Ascending aorta (tissue), 2 donors: ENCODE measurements at regions of chr20 and their contacts with region 1.

Region 1: GRCh38 chr20:20052074-20052970 is at the starts of genes CFAP61 and CRNKL1:
- DNase-seq: peak; percentile 79 to 97
- H3K4me3 ChIP-seq: peak within 1 kb of the TSS; percentile 88 to 93
- H3K27ac ChIP-seq: peak within 1 kb of the TSS; percentile 85 to 86
- H3K4me1 ChIP-seq: peaks cover 3 to 5% of the 10 kb centered on the region in 2 donors
- H3K27me3 ChIP-seq: no peaks in the 10 kb centered on the region
- CTCF ChIP-seq: peak in 2 of 3 experiments; percentile 7 to 18
- total RNA-seq, gene CFAP61: not detected
- total RNA-seq, gene CRNKL1: 2.2 TPM

Region 2: DNA sequence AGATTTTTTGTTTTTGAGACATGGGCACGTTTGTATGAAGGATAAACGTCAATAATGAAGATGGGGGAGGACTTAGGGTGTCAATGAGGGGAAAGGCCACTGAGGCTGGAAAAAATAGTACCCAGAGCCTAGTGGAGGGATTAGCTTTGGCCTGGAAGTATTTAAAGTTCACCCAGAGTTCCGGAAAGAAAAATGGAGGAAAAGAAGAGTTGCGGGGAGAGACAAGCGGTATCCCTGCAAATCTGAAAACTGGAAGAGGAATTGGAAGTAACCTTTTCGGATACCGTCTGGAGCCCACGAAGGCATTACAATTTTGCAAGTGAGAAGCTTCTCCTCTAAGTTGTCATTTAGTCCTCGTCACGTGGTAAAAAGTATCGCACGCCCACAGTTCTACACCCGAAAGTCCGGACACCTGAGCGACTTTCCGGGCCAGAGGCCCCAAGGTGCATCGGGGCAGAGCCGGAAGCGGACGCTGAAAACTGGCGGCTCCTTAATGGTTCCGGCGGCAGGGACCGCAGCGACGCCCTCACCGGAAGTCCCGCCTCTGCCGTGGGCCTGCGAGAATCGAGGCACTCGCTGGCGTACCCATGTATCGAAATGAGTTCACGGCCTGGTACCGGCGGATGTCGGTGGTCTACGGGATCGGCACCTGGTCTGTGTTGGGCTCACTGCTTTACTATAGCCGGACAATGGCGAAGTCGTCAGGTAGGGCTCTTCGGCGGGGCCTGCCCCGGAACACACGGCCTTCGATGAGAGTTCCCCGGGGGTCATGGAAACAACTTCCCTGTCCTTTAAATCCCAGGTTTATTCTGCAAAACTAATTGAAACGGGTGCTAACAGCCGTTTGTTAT is 1485.2 kb before region 1 on chr20 and contains the start of gene SMIM26:
- intact Hi-C with region 1: loop called (anchors 2 kb)
- DNase-seq: peak; percentile 43 to 96
- H3K4me3 ChIP-seq: peak within 1 kb of the TSS; percentile 73 to 86
- H3K27ac ChIP-seq: peak within 1 kb of the TSS; percentile 80 to 93
- H3K4me1 ChIP-seq: peaks cover 0 to 10% of the 10 kb centered on the region in 2 donors
- H3K27me3 ChIP-seq: no peaks in the 10 kb centered on the region
- CTCF ChIP-seq: no peak
- total RNA-seq, gene SMIM26: 67.7 TPM

Region 3: GRCh38 chr20:18793625-18794427 is 1258.5 kb before region 1 on chr20:
- intact Hi-C with region 1: loop called (anchors 10 kb)
- DNase-seq: peak; percentile 71 to 94
- H3K4me3 ChIP-seq: peak overlapping the region; percentile 63 to 79
- H3K27ac ChIP-seq: peak overlapping the region; percentile 78 to 80
- H3K4me1 ChIP-seq: peaks cover 0 to 3% of the 10 kb centered on the region in 2 donors
- H3K27me3 ChIP-seq: no peaks in the 10 kb centered on the region
- CTCF ChIP-seq: peak in 1 of 3 experiments; percentile 17

Region 4: DNA sequence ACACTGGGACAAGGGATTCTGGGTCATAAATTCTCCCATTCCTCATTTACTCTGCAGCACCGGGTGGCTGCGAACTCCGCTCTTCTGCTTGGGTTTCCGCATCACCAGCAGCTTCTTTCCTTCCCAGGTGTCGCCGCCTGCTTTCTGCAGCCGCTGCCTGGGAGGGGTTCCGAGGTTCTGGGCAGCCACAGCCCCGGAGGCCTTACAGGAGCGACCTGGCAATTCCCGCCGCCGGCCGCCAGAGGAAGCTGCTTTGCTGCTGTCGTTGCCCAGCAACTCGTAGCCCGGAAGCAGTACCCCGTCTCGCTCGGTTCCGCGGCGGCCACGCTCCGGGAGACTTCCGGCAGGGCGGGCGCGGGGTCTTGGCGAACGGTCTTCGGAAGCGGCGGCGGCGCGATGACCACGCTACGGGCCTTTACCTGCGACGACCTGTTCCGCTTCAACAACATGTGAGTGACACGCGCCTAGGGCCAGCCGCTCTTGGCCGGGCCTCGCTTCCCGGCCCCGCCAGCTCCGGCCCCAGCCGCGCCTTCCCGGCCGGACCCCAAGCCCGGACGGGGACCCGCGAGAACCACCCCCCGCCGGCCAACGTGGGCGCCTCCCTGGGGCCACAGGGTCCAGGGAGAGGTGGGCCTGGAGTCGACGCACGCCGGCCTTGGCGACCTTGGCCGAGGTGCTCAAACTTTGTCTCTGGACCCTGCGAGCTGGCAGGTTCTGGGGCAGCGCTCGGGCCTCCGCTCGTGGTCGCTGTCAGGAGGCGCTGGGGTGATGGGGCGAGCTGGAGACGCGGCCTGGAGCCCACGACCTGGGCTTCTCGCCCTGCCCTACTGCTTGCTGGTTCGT is 35.1 kb before region 1 on chr20 and contains the start of gene NAA20:
- intact Hi-C with region 1: loop called (anchors 1 kb)
- DNase-seq: peak; percentile 58 to 95
- H3K4me3 ChIP-seq: peak within 1 kb of the TSS; percentile 95 to 100
- H3K27ac ChIP-seq: peak within 1 kb of the TSS; percentile 71 to 74
- H3K4me1 ChIP-seq: peaks cover 17 to 19% of the 10 kb centered on the region in 2 donors
- H3K27me3 ChIP-seq: no peaks in the 10 kb centered on the region
- CTCF ChIP-seq: peak; percentile 78 to 92 (median 85)
- total RNA-seq, gene NAA20: 2.7 TPM

Region 5: GRCh38 chr20:20568604-20569205 is 516.4 kb after region 1 on chr20:
- intact Hi-C with region 1: loop called (anchors 10 kb)
- DNase-seq: no peak
- H3K4me3 ChIP-seq: no peak overlapping the region
- H3K27ac ChIP-seq: no peak overlapping the region
- H3K4me1 ChIP-seq: no peaks in the 10 kb centered on the region
- H3K27me3 ChIP-seq: no peaks in the 10 kb centered on the region
- CTCF ChIP-seq: peak; percentile 11 to 50 (median 43)

Region 6: DNA sequence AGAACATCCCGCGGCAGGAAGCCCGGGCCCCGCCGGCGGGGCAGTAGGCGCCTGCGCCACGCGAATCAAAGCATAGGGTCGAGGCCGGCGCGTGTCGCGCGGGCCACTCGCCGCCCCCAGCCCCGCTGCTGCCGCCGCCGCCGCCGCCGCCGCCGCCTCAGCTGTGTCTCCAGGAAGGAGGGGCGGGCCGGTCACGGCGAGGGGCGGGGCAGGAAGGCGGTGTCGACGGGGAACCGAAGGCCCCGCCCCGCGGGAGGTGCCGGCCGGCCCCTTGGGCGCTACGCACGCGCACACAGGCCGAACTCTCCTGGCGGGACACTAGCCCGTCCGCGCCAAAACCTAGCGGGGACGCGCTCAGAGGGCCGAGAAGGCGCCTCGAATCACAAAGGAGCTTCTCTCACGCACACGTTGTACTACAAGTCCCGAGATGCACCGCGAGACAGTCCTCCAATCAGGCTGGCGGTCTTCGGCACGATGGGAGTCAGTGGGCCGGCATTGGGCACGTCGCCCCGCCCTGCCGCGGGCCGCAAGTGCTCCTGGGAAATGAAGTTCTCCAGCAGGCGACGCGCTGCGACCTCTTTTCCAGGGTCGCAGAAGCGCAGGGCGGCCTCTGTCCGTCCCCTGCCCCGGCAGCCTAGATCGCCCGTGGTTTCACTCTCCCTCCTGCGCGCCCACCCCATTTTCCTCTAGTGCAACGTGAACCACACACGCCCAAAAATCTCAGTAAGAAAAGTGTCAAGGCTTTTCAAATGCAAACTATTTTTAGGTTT is 660.3 kb after region 1 on chr20 and contains the start of gene RALGAPA2:
- intact Hi-C with region 1: loop called (anchors 1 kb)
- DNase-seq: peak; percentile 92 to 99
- H3K4me3 ChIP-seq: peak within 1 kb of the TSS; percentile 93 to 96
- H3K27ac ChIP-seq: peak within 1 kb of the TSS; percentile 90 to 92
- H3K4me1 ChIP-seq: peaks cover 3 to 10% of the 10 kb centered on the region in 2 donors
- H3K27me3 ChIP-seq: no peaks in the 10 kb centered on the region
- CTCF ChIP-seq: peak in 2 of 3 experiments; percentile 13 to 21
- total RNA-seq, gene RALGAPA2: 68.9 TPM

Region 7: DNA sequence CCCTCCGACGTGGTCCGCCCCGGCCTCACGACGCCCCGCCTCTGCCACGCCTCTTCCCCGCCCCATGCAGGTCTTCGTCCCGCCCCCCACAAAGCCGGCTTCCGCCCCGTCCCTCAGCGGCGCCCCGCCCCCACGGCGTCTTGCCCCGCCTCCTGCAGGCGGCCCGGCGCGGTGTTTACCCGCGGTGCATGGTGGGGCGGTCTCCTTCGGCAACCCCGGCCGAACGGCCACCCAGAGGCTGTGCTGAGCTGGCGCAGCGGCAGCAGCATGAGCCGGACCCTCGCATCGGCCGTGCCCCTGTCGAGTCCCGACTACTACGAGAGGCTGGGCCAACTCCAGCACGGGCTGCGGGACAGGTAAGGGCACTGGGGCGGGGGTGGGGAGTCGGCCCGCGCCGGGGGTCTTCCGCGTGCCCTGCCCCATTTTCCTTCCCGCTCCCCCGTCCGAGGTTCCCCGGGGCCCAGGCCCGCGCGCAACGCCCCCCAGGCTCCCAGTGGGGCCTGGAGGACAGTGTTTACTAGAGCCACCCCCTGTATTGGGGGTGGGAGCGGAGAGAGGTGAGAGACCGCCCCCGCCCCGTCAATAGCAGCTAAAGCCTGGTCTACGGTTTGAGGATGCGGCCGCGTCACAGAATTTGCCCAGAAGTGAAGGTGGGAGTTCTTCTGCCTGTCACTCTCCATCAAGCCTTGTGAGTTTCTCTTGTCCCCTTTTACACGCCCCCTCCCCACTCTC is 1073.7 kb after region 1 on chr20 and contains the start of gene KIZ:
- intact Hi-C with region 1: loop called (anchors 10 kb)
- DNase-seq: peak; percentile 81 to 97
- H3K4me3 ChIP-seq: peak within 1 kb of the TSS; percentile 74 to 96
- H3K27ac ChIP-seq: peak within 1 kb of the TSS; percentile 72 to 83
- H3K4me1 ChIP-seq: peaks cover 2 to 4% of the 10 kb centered on the region in 2 donors
- H3K27me3 ChIP-seq: no peaks in the 10 kb centered on the region
- CTCF ChIP-seq: peak; percentile 39 to 67 (median 41)
- total RNA-seq, gene KIZ: 7.8 TPM